B cell (primary cell): ENCODE measurements at regions of chr6 and their contacts with region 1.

Region 1: DNA sequence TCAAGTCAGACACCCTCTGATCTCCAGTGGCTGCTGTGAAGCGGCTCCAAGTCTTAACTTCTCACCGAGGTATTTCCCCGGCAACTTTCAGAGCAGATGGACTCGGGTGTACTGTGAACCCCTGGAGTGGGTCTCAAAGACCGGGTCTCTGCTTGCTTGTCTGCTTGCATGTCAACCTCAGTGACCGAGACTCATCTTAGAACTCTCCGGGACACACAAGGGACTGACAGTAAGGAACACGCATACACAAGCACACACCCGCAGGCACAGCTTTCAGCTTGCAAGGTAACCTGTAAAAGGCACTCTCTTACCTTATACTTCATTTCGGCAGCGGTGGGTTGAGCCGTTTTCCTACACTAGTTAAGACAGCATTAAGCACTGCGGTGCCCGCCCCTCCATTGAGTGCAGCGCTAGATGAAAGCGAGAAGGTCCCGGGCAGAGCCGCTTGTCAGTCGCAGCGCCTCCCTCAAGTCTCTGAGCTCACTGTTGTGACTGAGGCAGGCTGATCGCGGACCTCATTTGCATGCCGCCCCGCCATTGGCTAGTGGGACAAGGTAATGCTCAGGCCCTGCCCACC is at the start of gene NEDD9:
- DNase-seq: peak; percentile 93
- ATAC-seq: peak; percentile 100
- H3K4me3 ChIP-seq: peak within 1 kb of the TSS; percentile 52 to 76 (median 67)
- H3K4me3 Mint-ChIP-seq: peak within 1 kb of the TSS; percentile 98
- H3K27ac ChIP-seq: peak within 1 kb of the TSS; percentile 70 to 81
- H3K27ac Mint-ChIP-seq: peak within 1 kb of the TSS; percentile 93
- H3K4me1 ChIP-seq: peaks cover 35 to 37% of the 10 kb centered on the region in 2 donors
- H3K4me1 Mint-ChIP-seq: peaks cover 54% of the 10 kb centered on the region
- H3K27me3 ChIP-seq: no peaks in the 10 kb centered on the region
- H3K27me3 Mint-ChIP-seq: no peaks in the 10 kb centered on the region
- CTCF ChIP-seq: no peak
- total RNA-seq, gene NEDD9: 46.2 and 50.9 TPM in 2 replicates

Region 2: GRCh38 chr6:11009353-11009752 is 222.9 kb before region 1 on chr6:
- CTCF ChIA-PET with region 1: no interaction called
- POLR2A ChIA-PET with region 1: no interaction called
- intact Hi-C with region 1: no loop called
- DNase-seq: no peak
- ATAC-seq: no peak
- H3K4me3 ChIP-seq: no peak overlapping the region
- H3K4me3 Mint-ChIP-seq: no peak overlapping the region
- H3K27ac ChIP-seq: no peak overlapping the region
- H3K27ac Mint-ChIP-seq: no peak overlapping the region
- H3K4me1 ChIP-seq: no peaks in the 10 kb centered on the region
- H3K4me1 Mint-ChIP-seq: no peaks in the 10 kb centered on the region
- H3K27me3 ChIP-seq: no peaks in the 10 kb centered on the region
- H3K27me3 Mint-ChIP-seq: peaks cover 13% of the 10 kb centered on the region
- CTCF ChIP-seq: no peak

Region 3: DNA sequence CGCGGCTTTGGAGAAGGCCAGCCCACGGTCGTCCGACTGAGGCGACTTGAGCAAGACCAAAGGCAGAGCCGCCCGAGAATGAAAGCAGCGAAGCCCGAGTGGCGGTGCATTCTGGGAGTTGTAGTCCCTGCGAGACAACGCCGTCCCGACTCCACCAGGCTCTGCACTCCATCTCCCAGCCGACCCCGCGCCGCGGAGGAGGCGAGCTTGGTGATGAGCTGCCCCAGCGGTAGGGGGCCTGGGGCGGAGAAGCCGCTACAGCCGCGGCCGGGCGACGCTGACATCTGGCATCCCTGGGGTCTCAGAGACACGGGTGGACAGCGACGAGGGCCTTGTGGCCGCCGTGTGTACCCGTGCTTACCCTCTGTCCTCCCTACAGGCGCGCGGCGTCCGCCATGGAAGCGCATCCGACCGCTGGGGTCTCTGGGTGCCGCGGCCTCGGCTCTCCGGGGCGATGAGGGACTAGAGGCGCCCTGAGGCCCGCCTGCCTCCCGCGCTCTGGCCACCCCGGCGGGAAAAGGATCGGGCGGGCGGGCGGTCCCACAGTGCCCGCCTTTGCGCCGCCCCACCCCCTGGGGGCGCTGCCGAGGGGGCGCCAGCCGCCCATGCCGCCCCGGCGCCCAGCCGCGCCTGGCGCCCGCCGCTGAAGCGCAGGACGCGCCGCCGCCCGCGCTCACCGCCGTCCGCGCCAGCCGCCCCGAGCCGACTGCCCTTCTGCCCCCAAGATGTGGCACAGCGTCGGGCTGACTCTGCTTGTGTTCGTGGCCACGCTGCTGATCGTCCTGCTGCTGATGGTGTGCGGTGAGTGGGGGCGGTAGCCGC is 138.5 kb before region 1 on chr6 and contains the start of gene SMIM13:
- CTCF ChIA-PET with region 1: no interaction called
- POLR2A ChIA-PET with region 1: interaction called, 4 read pairs
- intact Hi-C with region 1: loop called (anchors 1 kb)
- DNase-seq: peak; percentile 96
- ATAC-seq: peak; percentile 90
- H3K4me3 ChIP-seq: peak within 1 kb of the TSS; percentile 65 to 95 (median 89)
- H3K4me3 Mint-ChIP-seq: peak within 1 kb of the TSS; percentile 97
- H3K27ac ChIP-seq: peak within 1 kb of the TSS; percentile 91 to 93
- H3K27ac Mint-ChIP-seq: peak within 1 kb of the TSS; percentile 97
- H3K4me1 ChIP-seq: peaks cover 12% of the 10 kb centered on the region in 2 donors
- H3K4me1 Mint-ChIP-seq: peaks cover 22% of the 10 kb centered on the region
- H3K27me3 ChIP-seq: no peaks in the 10 kb centered on the region
- H3K27me3 Mint-ChIP-seq: peaks cover 3% of the 10 kb centered on the region
- CTCF ChIP-seq: peak; percentile 74
- total RNA-seq, gene SMIM13: 5.5 and 7.0 TPM in 2 replicates

Region 4: GRCh38 chr6:11251541-11252360 is 19.5 kb after region 1 on chr6:
- CTCF ChIA-PET with region 1: no interaction called
- POLR2A ChIA-PET with region 1: no interaction called
- intact Hi-C with region 1: no loop called
- DNase-seq: no peak
- ATAC-seq: no peak
- H3K4me3 ChIP-seq: no peak overlapping the region
- H3K4me3 Mint-ChIP-seq: no peak overlapping the region
- H3K27ac ChIP-seq: no peak overlapping the region
- H3K27ac Mint-ChIP-seq: peak overlapping the region; percentile 2
- H3K4me1 ChIP-seq: no peaks in the 10 kb centered on the region
- H3K4me1 Mint-ChIP-seq: peaks cover 8% of the 10 kb centered on the region
- H3K27me3 ChIP-seq: no peaks in the 10 kb centered on the region
- H3K27me3 Mint-ChIP-seq: no peaks in the 10 kb centered on the region
- CTCF ChIP-seq: no peak

Region 5: GRCh38 chr6:11381801-11382513 is 149.7 kb after region 1 on chr6:
- CTCF ChIA-PET with region 1: interaction called, 3 read pairs
- POLR2A ChIA-PET with region 1: no interaction called
- intact Hi-C with region 1: loop called (anchors 1 kb)
- DNase-seq: peak; percentile 91
- ATAC-seq: peak; percentile 92
- H3K4me3 ChIP-seq: peak overlapping the region; percentile 62 to 93 (median 80)
- H3K4me3 Mint-ChIP-seq: peak overlapping the region; percentile 95
- H3K27ac ChIP-seq: peak overlapping the region; percentile 81 to 85
- H3K27ac Mint-ChIP-seq: peak overlapping the region; percentile 88
- H3K4me1 ChIP-seq: peaks cover 64 to 74% of the 10 kb centered on the region in 2 donors
- H3K4me1 Mint-ChIP-seq: peaks cover 83% of the 10 kb centered on the region
- H3K27me3 ChIP-seq: no peaks in the 10 kb centered on the region
- H3K27me3 Mint-ChIP-seq: no peaks in the 10 kb centered on the region
- CTCF ChIP-seq: no peak

Region 6: DNA sequence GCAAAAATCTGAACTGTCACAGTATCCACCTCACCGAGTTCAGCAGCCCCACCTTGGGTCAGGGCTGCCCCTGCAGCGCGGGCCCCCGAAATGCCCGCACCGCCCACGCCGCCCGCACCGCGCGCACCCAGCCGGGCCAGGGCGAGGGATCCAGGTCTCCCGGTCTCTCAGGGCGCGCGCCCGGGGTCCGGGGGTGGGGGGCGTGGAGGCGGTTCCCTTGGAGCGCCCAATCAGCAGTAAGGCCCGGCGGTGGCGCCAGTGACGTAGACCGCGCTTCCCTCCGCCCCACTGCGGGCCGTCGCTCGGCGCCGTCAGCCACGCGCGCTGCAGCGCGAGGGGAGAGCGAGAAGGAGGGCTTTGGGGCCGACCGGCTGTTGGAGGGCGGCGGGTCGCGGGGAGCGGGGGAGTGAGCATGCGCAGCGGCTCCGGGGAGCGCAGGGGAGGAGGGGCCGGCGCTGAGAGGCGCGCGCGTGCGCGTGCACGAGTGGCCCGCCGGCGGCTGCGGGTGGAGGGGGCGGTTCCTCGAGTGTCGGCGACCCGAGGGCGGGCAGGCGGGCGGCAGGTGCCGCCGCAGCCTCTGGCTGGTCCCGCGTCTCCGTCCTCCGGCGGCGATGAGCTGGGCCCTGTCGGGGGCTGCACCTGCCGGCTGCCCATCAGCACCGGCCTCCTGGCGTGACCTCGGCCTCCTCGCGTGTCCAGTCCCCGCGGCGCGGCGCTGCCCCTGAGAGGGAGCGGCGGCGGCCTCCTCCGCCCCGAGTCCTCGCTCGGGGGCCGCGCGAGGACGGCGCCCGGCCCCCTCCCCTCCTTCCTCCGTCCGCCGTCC is 305.2 kb after region 1 on chr6 and contains the start of gene TMEM170B:
- CTCF ChIA-PET with region 1: no interaction called
- POLR2A ChIA-PET with region 1: no interaction called
- intact Hi-C with region 1: loop called (anchors 2 kb)
- DNase-seq: peak; percentile 99
- ATAC-seq: peak; percentile 93
- H3K4me3 ChIP-seq: peak within 1 kb of the TSS; percentile 68 to 83 (median 80)
- H3K4me3 Mint-ChIP-seq: peak within 1 kb of the TSS; percentile 87
- H3K27ac ChIP-seq: peak within 1 kb of the TSS; percentile 19 to 83
- H3K27ac Mint-ChIP-seq: peak within 1 kb of the TSS; percentile 92
- H3K4me1 ChIP-seq: peaks cover 8 to 11% of the 10 kb centered on the region in 2 donors
- H3K4me1 Mint-ChIP-seq: peaks cover 16% of the 10 kb centered on the region
- H3K27me3 ChIP-seq: no peaks in the 10 kb centered on the region
- H3K27me3 Mint-ChIP-seq: peaks cover 8% of the 10 kb centered on the region
- CTCF ChIP-seq: no peak
- total RNA-seq, gene TMEM170B: 3.2 and 3.4 TPM in 2 replicates